SK-N-SH (cell line): ENCODE measurements at regions of chr16 and their contacts with region 1.

Region 1: GRCh38 chr16:2867987-2868789 is 10.2 kb upstream of the PRSS22 start:
- DNase-seq: peak; percentile 98
- H3K4me3 ChIP-seq: peak overlapping the region; percentile 61 to 71
- H3K27ac ChIP-seq: peak overlapping the region; percentile 90 to 95
- H3K4me1 ChIP-seq: peaks cover 4 to 5% of the 10 kb centered on the region in 2 experiments; a peak in 3 of 4 replicates
- H3K27me3 ChIP-seq: no peaks in the 10 kb centered on the region
- CTCF ChIP-seq: peak; percentile 94
- EP300 ChIP-seq: peak in 1 of 2 experiments; percentile 11; a peak in 1 of 4 replicates
- RAD21 ChIP-seq: peak; percentile 92

Region 2: GRCh38 chr16:2777231-2777902 is 90.8 kb before region 1 on chr16 and contains the start of gene ELOB:
- CTCF ChIA-PET with region 1: interaction called, 11 read pairs
- POLR2A ChIA-PET with region 1: interaction called, 6 read pairs
- DNase-seq: peak; percentile 99
- H3K4me3 ChIP-seq: peak within 1 kb of the TSS; percentile 88 to 91
- H3K27ac ChIP-seq: peak within 1 kb of the TSS; percentile 94 to 97
- H3K4me1 ChIP-seq: peaks cover 11 to 25% of the 10 kb centered on the region in 2 experiments; a peak in 2 of 4 replicates
- H3K27me3 ChIP-seq: no peaks in the 10 kb centered on the region
- CTCF ChIP-seq: no peak
- EP300 ChIP-seq: no peak
- RAD21 ChIP-seq: no peak
- polyA plus RNA-seq, gene ELOB: 327 and 329 TPM in 2 replicates

Region 3: DNA sequence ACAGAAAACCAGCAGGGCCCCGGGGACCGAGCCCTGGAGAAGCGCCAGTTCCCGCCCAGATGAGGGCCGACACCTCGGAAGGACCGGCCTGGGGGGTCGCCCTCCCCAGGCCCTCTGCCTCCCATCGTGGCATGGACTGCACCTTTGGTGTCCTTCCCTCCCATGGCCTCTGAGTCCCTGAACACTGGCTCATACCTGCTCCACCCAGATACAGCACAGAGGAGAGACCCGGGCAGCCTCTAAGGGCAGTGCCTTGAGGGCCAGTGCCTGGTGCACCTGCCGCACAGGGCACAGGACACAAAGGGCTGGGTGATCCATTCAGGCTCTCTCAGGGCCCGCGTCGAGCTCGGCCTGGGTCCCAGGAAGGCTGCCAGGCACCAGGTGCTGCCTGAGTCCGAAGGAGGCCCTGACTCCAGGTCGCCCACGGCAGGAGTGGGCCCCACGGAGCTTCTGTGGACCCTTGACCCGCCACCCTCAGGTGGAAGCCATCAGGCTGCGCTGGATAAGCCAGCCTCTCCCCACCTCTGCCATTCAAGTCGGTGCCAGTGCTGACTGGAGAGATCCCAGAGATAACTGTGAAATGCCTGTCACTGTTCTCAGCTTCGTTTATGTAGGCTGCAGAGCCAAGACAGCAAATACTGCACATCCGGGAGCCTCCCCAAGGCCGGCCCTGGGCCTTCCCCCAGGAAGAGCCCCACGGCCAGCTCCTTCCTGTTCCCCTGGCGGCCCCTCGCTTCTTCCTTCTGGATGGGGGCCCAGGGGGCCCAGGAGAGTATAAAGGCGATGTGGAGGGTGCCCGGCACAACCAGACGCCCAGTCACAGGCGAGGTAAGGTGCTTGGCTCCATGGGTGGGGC is 38.5 kb before region 1 on chr16 and contains the start of gene ZG16B:
- CTCF ChIA-PET with region 1: interaction called, 16 read pairs
- POLR2A ChIA-PET with region 1: interaction called, 3 read pairs
- DNase-seq: peak; percentile 64
- H3K4me3 ChIP-seq: no peak within 1 kb of the TSS
- H3K27ac ChIP-seq: peak within 1 kb of the TSS in 1 of 2 experiments; percentile 16; a peak in 1 of 4 replicates
- H3K4me1 ChIP-seq: peaks cover 0 to 15% of the 10 kb centered on the region in 2 experiments; a peak in 1 of 4 replicates
- H3K27me3 ChIP-seq: no peaks in the 10 kb centered on the region; the same call in 1 of the 2 replicates
- CTCF ChIP-seq: no peak
- EP300 ChIP-seq: no peak
- RAD21 ChIP-seq: no peak
- polyA plus RNA-seq, gene ZG16B: 0.26 and 0.47 TPM in 2 replicates

Region 4: DNA sequence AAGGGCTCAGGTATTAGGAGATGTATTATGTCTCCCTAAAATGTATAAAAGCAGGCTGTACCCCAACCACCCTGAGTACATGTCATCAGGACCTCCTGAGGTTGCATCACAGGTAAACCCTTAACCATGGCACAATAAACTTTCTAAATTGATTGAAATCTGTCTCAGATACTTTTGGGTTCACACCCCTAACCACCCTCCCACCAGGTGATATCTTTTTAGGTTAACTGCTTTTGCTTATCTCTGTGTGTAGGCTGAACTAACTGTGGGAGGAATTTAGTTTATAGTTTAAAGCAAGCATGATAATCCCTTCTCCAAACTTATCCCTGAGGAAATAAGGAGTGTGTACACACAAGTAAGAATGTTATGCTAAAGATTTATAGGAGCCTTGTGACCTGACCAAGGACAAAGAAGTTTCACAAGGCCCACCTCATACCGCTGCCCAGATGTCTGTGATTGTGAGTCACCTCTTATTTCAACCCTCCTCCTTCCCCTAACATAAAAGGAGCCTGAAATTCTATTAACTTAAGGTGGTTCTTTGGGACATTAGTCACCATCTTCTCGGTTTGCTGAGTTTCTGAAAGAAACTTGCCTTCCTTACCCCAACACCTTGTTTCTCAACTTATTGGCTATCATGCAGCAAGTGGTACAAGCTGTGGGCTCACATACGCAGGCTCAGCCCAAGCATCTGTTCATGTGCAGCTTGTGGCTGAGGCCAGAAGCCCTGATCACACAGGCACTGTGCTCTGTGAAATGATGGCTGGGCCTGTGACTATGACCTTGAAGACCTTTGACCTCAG is 21.5 kb before region 1 on chr16:
- CTCF ChIA-PET with region 1: interaction called, 11 read pairs
- POLR2A ChIA-PET with region 1: no interaction called
- DNase-seq: no peak
- H3K4me3 ChIP-seq: no peak overlapping the region
- H3K27ac ChIP-seq: no peak overlapping the region
- H3K4me1 ChIP-seq: no peaks in the 10 kb centered on the region; a peak in 1 of 4 replicates
- H3K27me3 ChIP-seq: peaks cover 5% of the 10 kb centered on the region; the same call in 1 of the 2 replicates
- CTCF ChIP-seq: no peak
- EP300 ChIP-seq: no peak
- RAD21 ChIP-seq: no peak

Region 5: GRCh38 chr16:2883027-2883851 is 15.1 kb after region 1 on chr16 and contains the start of gene FLYWCH2:
- CTCF ChIA-PET with region 1: interaction called, 27 read pairs
- POLR2A ChIA-PET with region 1: interaction called, 13 read pairs
- DNase-seq: peak; percentile 95
- H3K4me3 ChIP-seq: peak within 1 kb of the TSS; percentile 73 to 84
- H3K27ac ChIP-seq: peak within 1 kb of the TSS; percentile 93 to 94
- H3K4me1 ChIP-seq: peaks cover 0 to 6% of the 10 kb centered on the region in 2 experiments; a peak in 1 of 4 replicates
- H3K27me3 ChIP-seq: no peaks in the 10 kb centered on the region
- CTCF ChIP-seq: no peak
- EP300 ChIP-seq: no peak; a peak in 1 of 4 replicates
- RAD21 ChIP-seq: no peak
- polyA plus RNA-seq, gene FLYWCH2: 56.4 and 64.8 TPM in 2 replicates

Region 6: DNA sequence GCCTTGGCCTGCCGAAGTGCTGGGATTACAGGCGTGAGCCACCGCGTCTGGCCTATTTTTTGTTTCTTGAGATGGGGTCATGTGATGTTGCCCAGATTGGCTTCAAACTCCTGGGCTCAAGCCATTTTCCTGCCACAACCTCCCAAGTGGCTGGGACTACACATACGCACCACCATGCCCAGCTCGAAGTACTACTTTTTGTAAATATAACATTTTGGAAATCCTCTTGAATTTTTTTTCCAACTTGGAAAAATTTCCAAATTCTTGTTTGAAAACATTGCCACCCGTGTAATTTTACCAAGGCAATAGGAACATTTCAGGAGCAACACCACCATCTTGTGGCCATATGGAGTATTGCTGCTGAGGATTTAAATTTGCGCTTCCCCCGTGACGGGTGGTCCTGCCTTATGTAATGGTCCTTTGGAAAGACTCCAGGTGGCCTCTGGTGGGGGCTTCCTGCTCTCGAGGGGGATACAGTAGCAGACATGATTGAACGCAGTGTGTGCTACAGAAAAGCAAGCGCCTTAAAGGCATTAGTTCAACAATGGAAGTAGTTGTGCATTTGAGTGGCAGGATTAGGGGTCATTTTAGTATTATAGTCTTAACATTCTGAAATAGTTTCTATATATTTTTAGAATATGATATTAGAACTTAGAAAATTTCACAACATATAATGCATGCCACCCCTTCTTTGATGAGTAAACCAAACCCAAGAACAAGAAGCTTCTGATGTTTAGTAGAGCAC is 51.5 kb after region 1 on chr16:
- CTCF ChIA-PET with region 1: interaction called, 15 read pairs
- POLR2A ChIA-PET with region 1: no interaction called
- DNase-seq: peak; percentile 84
- H3K4me3 ChIP-seq: peak overlapping the region in 1 of 2 experiments; percentile 38; a peak in 1 of 4 replicates
- H3K27ac ChIP-seq: peak overlapping the region in 1 of 2 experiments; percentile 46; a peak in 2 of 4 replicates
- H3K4me1 ChIP-seq: peaks cover 0 to 17% of the 10 kb centered on the region in 2 experiments; a peak in 3 of 4 replicates
- H3K27me3 ChIP-seq: no peaks in the 10 kb centered on the region
- CTCF ChIP-seq: peak; percentile 93
- EP300 ChIP-seq: no peak
- RAD21 ChIP-seq: peak; percentile 86